MCF 10A (cell line): ENCODE measurements at regions of chrX and their contacts with region 1.

Region 1: DNA sequence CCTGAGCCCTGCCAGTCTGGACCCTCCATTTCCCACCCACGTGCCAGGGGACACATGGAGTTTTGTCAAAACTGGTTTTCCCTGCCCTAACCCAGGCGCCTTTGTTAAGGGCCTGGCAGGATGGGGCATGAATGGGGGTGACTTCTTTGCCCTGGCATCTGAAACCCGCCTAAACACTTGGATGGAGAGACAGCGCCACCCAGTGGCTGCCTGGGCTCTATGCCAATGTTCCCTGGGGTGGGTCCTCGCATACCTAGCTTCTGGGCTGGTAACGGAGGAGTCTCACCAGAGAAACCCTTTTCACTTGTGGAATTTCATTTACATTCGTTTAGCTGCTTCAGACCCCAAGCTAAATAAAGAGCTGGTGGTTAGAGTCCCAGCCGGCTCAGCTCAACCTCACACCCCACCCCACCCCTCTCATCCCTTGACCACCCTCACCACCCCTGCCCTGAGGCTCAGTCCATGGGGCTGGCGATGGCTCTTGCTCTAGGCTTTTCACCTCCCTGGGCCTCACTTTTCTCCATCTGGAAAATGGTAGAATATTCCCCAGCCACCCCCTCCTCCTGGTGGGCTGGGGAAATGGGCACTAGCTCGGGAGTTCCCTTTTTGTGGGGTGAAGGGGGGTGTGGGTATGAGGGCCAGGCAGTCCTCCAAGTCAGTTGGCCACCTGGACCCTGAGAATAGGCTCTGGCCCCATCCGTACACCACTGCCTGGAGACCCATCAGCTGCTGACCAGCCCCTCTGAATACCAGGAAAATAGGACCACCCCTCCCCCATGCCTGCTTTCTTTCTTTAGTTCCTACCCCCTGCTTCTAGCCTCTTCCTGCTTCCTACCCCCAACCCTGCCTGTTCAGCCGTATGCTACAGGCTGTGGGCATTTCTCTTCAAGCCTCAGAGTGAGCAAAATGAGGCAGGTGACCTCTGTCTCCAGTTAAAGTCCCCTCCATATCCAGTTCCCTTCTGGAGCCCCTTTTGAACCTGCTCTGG is 57.1 kb upstream of the PJA1 start:
- DNase-seq: peak; percentile 72
- H3K4me3 Mint-ChIP-seq: no peak overlapping the region
- H3K27ac Mint-ChIP-seq: no peak overlapping the region
- H3K4me1 Mint-ChIP-seq: no peaks in the 10 kb centered on the region
- H3K27me3 Mint-ChIP-seq: peaks cover 23% of the 10 kb centered on the region
- CTCF ChIP-seq: peak; percentile 66

Region 2: DNA sequence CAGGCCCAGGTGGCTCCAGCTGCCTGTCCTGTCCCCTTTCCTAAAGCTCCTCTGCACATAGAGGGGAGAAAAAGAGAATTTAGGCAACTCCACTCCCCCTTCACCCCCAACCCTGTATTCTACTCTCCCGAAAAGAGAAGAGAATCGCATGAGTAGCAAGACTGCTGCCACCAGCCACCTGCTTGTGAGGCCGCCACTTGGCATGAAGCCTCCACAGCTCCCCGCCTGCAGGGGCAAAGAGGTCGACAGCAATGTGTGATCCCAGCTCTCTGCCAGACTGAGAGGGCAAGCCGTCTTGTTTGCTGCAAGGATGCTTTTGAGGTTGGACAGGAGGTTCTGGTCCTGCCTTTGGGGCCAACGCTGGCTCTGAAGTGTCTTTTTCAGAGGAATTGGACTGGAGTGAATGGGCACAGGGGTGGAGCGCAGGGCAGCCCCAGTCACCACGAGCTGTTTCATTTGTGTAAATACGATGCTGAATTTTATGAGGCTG is 497.8 kb before region 1 on chrX:
- CTCF ChIA-PET with region 1: no interaction called
- POLR2A ChIA-PET with region 1: no interaction called
- intact Hi-C with region 1: no loop called
- DNase-seq: no peak
- H3K4me3 Mint-ChIP-seq: no peak overlapping the region
- H3K27ac Mint-ChIP-seq: no peak overlapping the region
- H3K4me1 Mint-ChIP-seq: no peaks in the 10 kb centered on the region
- H3K27me3 Mint-ChIP-seq: peaks cover 76% of the 10 kb centered on the region
- CTCF ChIP-seq: no peak

Region 3: GRCh38 chrX:68822641-68823410 is 399.6 kb before region 1 on chrX:
- CTCF ChIA-PET with region 1: interaction called, 204 read pairs
- POLR2A ChIA-PET with region 1: interaction called, 16 read pairs
- intact Hi-C with region 1: loop called (anchors 1 kb)
- DNase-seq: peak; percentile 65
- H3K4me3 Mint-ChIP-seq: no peak overlapping the region
- H3K27ac Mint-ChIP-seq: no peak overlapping the region
- H3K4me1 Mint-ChIP-seq: peaks cover 11% of the 10 kb centered on the region
- H3K27me3 Mint-ChIP-seq: peaks cover 40% of the 10 kb centered on the region
- CTCF ChIP-seq: peak; percentile 76

Region 4: DNA sequence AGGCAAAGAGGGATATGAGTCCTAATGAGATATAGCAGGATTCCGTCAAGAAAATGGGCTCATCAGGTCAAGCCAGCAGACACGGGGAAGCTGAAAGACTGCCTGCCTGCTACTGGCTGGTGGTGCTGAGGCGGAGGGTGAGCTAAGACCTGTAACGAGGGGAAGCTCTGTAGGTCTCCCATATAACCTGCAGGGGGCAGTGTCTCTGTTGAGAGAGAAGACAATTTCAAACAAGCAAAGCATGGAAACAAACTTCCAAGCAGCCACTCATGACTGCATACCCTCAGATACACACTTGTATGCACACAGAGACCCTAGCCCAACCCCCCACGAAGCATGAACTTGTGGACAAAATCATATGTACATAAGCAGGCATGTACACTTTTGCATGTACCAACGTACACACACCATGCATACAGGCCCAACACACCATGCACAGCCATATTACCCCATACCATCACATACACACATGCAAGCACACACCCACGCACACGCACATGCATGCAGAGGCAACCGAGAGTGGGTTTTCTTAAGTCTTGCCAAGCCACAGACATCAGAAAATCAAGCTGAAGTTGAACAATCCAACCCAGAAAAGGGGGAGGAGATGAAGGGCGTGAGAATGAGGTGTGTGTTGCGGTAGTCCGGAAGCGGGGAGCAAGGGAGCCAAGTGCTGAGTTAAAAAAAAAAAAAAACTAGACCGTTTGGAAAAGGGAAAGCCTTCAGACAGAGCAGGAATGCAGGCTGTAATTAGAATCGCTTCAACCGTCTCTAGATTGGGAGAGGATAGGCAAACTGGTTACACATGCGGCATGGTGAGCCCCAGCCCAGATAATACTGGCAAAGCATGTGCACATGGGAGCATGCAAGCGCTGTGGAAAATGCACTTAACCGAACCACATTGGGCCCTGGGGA is 128.2 kb before region 1 on chrX:
- CTCF ChIA-PET with region 1: interaction called, 21 read pairs
- POLR2A ChIA-PET with region 1: no interaction called
- intact Hi-C with region 1: loop called (anchors 1 kb)
- DNase-seq: peak; percentile 70
- H3K4me3 Mint-ChIP-seq: no peak overlapping the region
- H3K27ac Mint-ChIP-seq: no peak overlapping the region
- H3K4me1 Mint-ChIP-seq: no peaks in the 10 kb centered on the region
- H3K27me3 Mint-ChIP-seq: peaks cover 5% of the 10 kb centered on the region
- CTCF ChIP-seq: peak; percentile 46

Region 5: DNA sequence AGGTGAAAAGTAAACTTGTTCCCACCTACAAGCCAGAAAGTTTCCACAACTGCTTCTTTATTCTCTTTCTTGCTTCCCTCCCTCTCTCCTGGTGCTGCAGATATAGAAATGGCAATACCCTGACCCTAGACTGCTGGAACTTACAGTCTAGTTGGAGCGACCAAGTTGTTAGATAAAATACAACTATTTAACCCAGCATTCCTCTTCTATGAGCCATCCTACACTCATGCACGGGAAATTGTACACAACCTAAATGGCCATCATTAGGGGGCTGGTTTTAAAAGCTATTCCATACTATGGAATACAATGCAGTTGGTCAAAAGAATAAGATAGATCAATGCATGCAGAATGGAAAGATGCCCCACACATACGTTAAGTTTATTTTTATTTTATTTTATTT is 98.3 kb before region 1 on chrX:
- CTCF ChIA-PET with region 1: no interaction called
- POLR2A ChIA-PET with region 1: no interaction called
- intact Hi-C with region 1: no loop called
- DNase-seq: no peak
- H3K4me3 Mint-ChIP-seq: no peak overlapping the region
- H3K27ac Mint-ChIP-seq: peak overlapping the region; percentile 40
- H3K4me1 Mint-ChIP-seq: peaks cover 5% of the 10 kb centered on the region
- H3K27me3 Mint-ChIP-seq: peaks cover 37% of the 10 kb centered on the region
- CTCF ChIP-seq: no peak

Region 6: DNA sequence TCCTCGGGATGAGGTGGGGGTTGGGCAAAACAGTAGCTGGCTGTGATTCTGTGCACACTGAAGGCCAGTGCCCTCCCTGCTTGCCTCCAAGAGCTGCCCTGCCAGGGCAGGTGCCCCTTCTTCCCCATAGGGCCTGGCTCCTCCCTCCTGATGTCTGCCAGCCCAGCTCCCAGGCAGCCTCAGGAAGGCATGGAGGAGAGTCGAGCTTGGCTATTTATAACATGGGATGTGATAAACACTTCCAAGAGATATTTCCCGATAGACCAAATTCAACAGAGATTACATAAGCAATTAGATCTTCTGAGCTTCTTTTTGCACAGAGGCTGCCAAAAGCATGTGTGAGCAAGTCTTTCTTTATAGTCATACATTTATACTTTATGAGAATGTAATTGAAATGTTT is 11.8 kb before region 1 on chrX:
- CTCF ChIA-PET with region 1: interaction called, 16 read pairs
- POLR2A ChIA-PET with region 1: no interaction called
- intact Hi-C with region 1: no loop called
- DNase-seq: no peak
- H3K4me3 Mint-ChIP-seq: no peak overlapping the region
- H3K27ac Mint-ChIP-seq: no peak overlapping the region
- H3K4me1 Mint-ChIP-seq: no peaks in the 10 kb centered on the region
- H3K27me3 Mint-ChIP-seq: peaks cover 71% of the 10 kb centered on the region
- CTCF ChIP-seq: no peak

Region 7: GRCh38 chrX:69285881-69286564 is 63.6 kb after region 1 on chrX:
- CTCF ChIA-PET with region 1: interaction called, 8 read pairs
- POLR2A ChIA-PET with region 1: no interaction called
- intact Hi-C with region 1: loop called (anchors 5 kb)
- DNase-seq: peak; percentile 45
- H3K4me3 Mint-ChIP-seq: peak overlapping the region; percentile 60
- H3K27ac Mint-ChIP-seq: no peak overlapping the region
- H3K4me1 Mint-ChIP-seq: peaks cover 5% of the 10 kb centered on the region
- H3K27me3 Mint-ChIP-seq: peaks cover 75% of the 10 kb centered on the region
- CTCF ChIP-seq: peak; percentile 90